ENCODE measurements at regions of chr14 and their contacts with region 1.

Region 1: DNA sequence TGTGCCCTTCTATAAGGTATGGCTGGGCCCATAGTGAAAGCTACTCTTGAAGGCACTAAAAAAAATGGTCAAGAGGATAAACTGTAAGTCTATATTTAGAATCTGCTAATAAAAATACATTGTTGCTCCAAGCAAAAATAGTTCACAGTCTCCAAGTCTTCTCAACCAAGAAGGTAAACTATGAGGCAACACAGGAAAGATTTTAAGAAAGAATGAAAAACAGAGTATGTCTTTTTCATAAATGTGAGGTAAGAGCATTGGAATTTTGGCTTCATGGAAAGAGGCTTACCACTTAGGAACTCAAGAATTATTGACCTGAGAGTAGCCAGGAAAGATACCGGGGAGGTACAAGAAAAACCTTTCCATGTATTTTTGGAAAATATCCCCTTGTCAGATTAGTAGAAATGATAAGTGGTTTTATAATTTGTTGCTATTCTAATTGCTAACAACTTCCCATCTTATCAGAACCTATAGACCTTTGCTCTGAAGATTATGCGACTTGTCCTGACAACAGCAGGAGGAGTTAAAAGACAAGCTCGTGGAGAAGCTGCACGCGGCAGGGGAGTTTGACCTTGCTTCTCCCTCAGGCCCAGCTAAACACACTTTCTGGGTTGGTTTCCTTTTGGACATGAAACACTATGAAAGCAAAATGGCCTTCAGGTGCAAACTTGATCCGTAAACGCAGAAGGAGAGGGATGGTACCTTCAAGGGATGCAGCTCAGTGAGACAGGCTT is 238.1 kb downstream of the FOXN3 start:
- DNase-seq: no peak
- H3K4me3 ChIP-seq: no peak overlapping the region
- H3K27ac ChIP-seq: no peak overlapping the region
- H3K4me1 ChIP-seq: no peaks in the 10 kb centered on the region
- H3K27me3 ChIP-seq: no peaks in the 10 kb centered on the region
- CTCF ChIP-seq: no peak
- POLR2A ChIP-seq: no peak

Region 2: DNA sequence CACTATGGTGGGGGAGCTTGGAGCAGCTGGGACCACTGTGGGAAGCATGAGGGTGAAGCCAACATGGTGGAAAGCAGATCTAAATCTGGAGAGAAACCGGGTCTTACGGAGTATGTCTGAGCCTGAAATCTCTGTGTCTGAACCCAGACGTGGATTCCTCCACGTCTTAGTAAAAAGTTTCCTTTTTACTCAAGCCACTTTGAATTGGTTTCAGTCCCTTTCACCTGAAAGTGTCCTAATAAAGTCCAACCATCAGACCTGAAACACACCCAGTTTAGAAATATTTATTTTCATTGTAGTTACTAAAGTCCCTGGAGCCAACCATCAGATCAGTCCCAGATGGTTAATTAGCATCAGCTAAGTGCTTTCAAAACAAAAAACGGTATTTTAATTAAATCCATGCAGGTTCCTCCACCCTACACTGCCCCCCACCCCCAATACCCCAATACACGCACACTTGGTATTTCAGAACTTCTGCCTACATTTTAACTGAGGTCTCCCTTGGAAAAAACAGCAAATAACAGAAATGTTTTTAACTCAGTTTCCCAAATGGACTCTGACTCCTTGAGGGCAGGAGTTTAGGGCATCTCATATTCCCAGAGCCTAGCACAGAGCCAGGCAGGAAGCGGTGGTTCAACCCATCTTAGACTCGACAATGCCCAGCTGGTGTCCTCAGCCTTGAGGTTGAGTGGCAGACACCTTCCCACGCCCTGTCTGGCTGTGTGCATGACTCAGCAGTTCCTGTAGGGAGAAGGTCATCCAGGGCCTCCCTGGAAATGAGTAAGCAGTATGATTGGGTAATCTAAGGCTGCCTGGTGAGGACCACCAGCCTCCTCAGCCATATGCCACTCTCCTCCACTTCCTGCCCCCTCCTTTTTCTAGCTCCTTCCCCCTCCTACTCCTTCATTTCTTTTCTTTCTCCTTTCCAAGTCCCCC is 178.7 kb before region 1 on chr14:
- CTCF ChIA-PET with region 1: no interaction called
- POLR2A ChIA-PET with region 1: no interaction called
- dilution Hi-C with region 1: no loop called
- intact Hi-C with region 1: no loop called
- DNase-seq: peak; percentile 57
- H3K4me3 ChIP-seq: no peak overlapping the region
- H3K27ac ChIP-seq: peak overlapping the region; percentile 12
- H3K4me1 ChIP-seq: peaks cover 6% of the 10 kb centered on the region
- H3K27me3 ChIP-seq: no peaks in the 10 kb centered on the region
- CTCF ChIP-seq: no peak
- POLR2A ChIP-seq: no peak

Region 3: DNA sequence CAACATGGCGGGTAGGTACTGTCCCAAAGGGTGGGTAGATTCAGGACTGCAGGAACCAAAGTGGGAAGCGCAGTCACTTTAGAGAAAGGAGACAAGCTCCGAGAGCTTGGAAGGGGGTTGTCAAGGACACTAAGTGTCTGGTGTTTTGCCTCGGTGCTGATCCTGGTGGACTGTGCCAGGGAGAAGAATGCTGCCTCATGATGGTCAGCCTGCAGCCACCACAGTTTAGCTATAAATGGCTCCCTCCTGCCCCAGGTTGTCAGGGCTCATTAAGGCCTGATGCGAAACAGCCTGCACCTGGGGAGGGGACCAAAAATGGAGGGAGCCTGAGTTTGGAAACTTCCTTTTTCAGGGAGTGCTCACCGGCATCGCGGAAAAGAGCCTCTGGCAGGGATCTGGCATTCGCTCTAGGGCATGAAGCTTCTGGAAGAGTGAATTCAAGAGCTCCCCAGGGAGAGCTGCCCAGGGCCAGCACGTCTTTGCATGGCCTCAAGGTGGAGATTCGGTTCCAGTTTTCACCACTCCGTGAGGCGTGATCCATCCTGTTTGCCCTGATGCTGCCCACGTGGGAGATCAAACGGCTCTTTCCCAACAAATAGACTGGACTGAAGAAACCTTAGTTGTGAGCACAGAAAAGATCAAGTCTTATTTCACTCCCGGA is 74.0 kb after region 1 on chr14:
- CTCF ChIA-PET with region 1: no interaction called
- POLR2A ChIA-PET with region 1: no interaction called
- dilution Hi-C with region 1: no loop called
- intact Hi-C with region 1: no loop called
- DNase-seq: no peak
- H3K4me3 ChIP-seq: no peak overlapping the region
- H3K27ac ChIP-seq: no peak overlapping the region
- H3K4me1 ChIP-seq: no peaks in the 10 kb centered on the region
- H3K27me3 ChIP-seq: no peaks in the 10 kb centered on the region
- CTCF ChIP-seq: peak in 1 of 2 donors; percentile 3
- POLR2A ChIP-seq: no peak

Region 4: DNA sequence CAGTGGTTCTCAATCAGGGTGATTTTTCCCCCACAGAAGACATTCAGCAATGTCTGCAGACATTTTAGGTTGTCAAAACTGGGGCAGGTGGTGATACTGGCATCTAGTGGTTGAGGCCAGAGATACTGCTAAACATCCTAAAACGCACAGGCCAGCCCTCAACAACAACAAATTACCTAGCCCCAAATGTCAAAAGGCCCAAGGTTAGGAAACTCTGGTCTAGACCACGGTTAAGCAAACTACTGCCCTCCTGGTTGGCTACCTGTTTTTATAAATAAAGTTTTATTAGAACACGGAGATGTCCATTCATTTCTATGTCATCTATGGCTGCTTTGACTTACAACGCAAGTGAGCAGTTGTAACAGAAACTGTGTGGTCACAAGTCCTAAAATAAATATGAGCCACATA is 588.9 kb after region 1 on chr14:
- CTCF ChIA-PET with region 1: interaction called, 3 read pairs
- POLR2A ChIA-PET with region 1: no interaction called
- dilution Hi-C with region 1: no loop called
- intact Hi-C with region 1: loop called (anchors 1 kb)
- DNase-seq: peak; percentile 44
- H3K4me3 ChIP-seq: no peak overlapping the region
- H3K27ac ChIP-seq: no peak overlapping the region
- H3K4me1 ChIP-seq: peaks cover 17% of the 10 kb centered on the region
- H3K27me3 ChIP-seq: no peaks in the 10 kb centered on the region
- CTCF ChIP-seq: peak; percentile 45 to 65
- POLR2A ChIP-seq: no peak

Region 5: GRCh38 chr14:89899917-89900663 is 721.1 kb after region 1 on chr14:
- CTCF ChIA-PET with region 1: no interaction called
- POLR2A ChIA-PET with region 1: no interaction called
- dilution Hi-C with region 1: no loop called
- intact Hi-C with region 1: loop called (anchors 1 kb)
- DNase-seq: peak; percentile 35
- H3K4me3 ChIP-seq: no peak overlapping the region
- H3K27ac ChIP-seq: no peak overlapping the region
- H3K4me1 ChIP-seq: no peaks in the 10 kb centered on the region
- H3K27me3 ChIP-seq: no peaks in the 10 kb centered on the region
- CTCF ChIP-seq: peak; percentile 27 to 32
- POLR2A ChIP-seq: no peak